ENCODE measurements at regions of chr22 and their contacts with region 1.

Region 1: DNA sequence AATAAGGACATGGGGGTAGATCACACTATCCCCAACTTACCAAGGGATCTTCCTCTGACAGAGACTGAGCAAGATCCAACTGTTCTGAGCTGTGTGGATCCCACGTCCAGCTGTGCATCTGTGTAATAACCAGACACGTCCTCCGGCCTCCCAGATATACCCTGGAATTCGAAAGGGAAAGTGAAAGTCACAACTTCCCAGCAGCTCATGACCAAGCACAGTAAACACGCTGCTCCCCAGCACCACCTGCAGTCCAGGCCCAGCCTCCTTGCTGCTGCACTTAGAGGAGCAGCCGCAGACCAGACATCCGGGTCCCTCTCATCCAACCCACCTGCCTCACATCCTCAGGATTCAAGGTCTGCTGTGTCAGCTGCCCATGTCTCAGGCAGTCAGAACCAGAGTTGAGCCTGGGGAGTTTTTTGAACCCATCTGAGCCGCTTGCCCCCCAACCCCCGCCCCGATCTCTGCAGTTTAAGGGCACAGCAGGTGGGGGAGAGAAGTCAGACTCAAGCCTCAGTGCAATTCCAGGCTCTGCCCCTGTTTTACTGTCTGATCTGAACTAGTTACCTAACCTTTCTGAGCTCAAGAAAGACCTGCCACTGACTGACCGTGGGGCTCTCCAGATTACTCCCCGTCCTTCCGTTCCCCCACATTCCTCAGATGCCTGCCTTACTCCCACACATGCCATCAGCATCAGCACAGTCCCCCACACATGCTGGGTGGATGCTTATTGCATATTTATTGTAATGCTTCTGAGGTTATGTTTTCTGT is at the start of gene APOL2:
- DNase-seq: peak; percentile 75
- ATAC-seq: peak; percentile 98
- H3K4me3 ChIP-seq: peak within 1 kb of the TSS; percentile 96
- H3K27ac ChIP-seq: peak within 1 kb of the TSS; percentile 79
- H3K4me1 ChIP-seq: peaks cover 23% of the 10 kb centered on the region
- H3K27me3 ChIP-seq: no peaks in the 10 kb centered on the region
- CTCF ChIP-seq: peak; percentile 77
- EP300 ChIP-seq: no peak; a peak in 1 of 4 replicates
- POLR2A ChIP-seq: peak; percentile 69
- RAD21 ChIP-seq: peak; percentile 47
- polyA plus RNA-seq, gene APOL2: 4.4 to 14.7 TPM

Region 2: GRCh38 chr22:36156515-36157419 is 82.8 kb before region 1 on chr22:
- CTCF ChIA-PET with region 1: no interaction called
- POLR2A ChIA-PET with region 1: no interaction called
- RAD21 ChIA-PET with region 1: interaction called, 18 read pairs
- SMC1A ChIA-PET with region 1: interaction called, 10 read pairs
- in situ Hi-C with region 1: no loop called
- intact Hi-C with region 1: no loop called
- DNase-seq: no peak
- ATAC-seq: peak; percentile 43
- H3K4me3 ChIP-seq: peak overlapping the region; percentile 64
- H3K27ac ChIP-seq: peak overlapping the region; percentile 86
- H3K4me1 ChIP-seq: peaks cover 36% of the 10 kb centered on the region
- H3K27me3 ChIP-seq: no peaks in the 10 kb centered on the region
- CTCF ChIP-seq: no peak
- EP300 ChIP-seq: no peak
- POLR2A ChIP-seq: no peak
- RAD21 ChIP-seq: no peak

Region 3: DNA sequence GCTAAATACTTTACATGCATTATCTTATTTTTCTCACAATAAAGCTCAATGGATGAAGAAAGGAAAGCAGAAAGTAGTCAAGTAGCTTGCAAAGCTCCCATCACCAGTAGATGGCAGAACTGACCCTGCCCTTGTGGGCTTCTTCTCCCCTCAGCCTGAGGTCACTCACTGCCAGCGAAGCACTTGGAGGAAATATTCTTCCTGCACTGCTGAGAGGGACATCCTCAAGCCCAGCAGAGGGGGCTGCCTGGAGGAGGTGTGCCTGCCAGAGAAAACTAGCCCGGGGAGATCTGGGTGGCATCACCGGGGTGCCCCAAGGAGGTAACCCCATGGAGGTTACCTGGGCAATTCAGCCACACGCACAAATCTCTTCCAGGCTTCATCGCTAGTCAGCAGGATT is 44.6 kb before region 1 on chr22:
- CTCF ChIA-PET with region 1: interaction called, 26 read pairs
- POLR2A ChIA-PET with region 1: no interaction called
- RAD21 ChIA-PET with region 1: interaction called, 10 read pairs
- SMC1A ChIA-PET with region 1: interaction called, 36 read pairs
- in situ Hi-C with region 1: no loop called
- intact Hi-C with region 1: no loop called
- DNase-seq: no peak
- ATAC-seq: peak; percentile 91
- H3K4me3 ChIP-seq: no peak overlapping the region
- H3K27ac ChIP-seq: no peak overlapping the region
- H3K4me1 ChIP-seq: peaks cover 12% of the 10 kb centered on the region
- H3K27me3 ChIP-seq: no peaks in the 10 kb centered on the region
- CTCF ChIP-seq: peak; percentile 68 to 79 (median 78)
- EP300 ChIP-seq: no peak
- POLR2A ChIP-seq: no peak
- RAD21 ChIP-seq: peak; percentile 72

Region 4: DNA sequence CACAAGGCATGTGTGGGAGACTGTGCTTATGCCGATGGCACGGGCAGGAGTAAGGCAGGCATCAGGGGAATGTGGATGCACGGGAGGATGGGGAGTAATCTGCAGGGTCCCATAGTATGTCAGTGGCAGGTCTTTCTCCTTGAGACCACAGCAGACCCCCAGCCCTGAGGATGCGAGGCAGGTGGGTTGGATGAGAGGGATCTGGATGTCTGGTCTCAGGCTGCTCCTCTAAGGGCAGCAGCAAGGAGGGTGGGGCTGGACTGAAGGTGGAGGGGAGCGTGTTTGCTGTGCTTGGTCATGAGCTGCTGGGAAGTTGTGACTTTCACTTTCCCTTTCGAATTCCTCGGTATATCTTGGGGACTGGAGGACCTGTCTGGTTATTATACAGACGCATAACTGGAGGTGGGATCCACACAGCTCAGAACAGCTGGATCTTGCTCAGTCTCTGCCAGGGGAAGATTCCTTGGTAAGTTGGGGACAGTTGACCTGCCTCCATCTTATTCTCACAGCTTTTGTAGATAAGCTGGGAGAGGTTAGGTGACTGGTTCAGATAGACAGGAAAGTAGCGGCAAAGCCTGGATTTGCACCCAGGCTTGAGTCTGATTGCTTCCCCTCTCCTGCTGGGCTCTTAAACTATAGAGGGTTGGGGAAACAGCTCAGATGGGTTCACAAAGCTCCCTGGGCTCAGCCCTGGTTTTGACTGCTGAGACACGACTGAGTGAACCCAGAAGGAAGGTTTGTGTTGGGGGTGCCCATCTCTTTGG is 13.3 kb after region 1 on chr22 and contains the start of gene APOL1:
- CTCF ChIA-PET with region 1: interaction called, 153 read pairs
- POLR2A ChIA-PET with region 1: interaction called, 99 read pairs
- RAD21 ChIA-PET with region 1: interaction called, 100 read pairs
- SMC1A ChIA-PET with region 1: interaction called, 165 read pairs
- in situ Hi-C with region 1: no loop called
- intact Hi-C with region 1: no loop called
- DNase-seq: peak; percentile 62
- ATAC-seq: peak; percentile 83
- H3K4me3 ChIP-seq: peak within 1 kb of the TSS; percentile 91
- H3K27ac ChIP-seq: peak within 1 kb of the TSS; percentile 80
- H3K4me1 ChIP-seq: peaks cover 38% of the 10 kb centered on the region
- H3K27me3 ChIP-seq: no peaks in the 10 kb centered on the region
- CTCF ChIP-seq: no peak
- EP300 ChIP-seq: no peak
- POLR2A ChIP-seq: 0 out of 2 replicates have a peak, but pooled peaks have one; percentile 49
- RAD21 ChIP-seq: no peak
- polyA plus RNA-seq, gene APOL1: 9.0 to 10.7 TPM

Region 5: GRCh38 chr22:36277482-36278291 is 38.1 kb after region 1 on chr22:
- CTCF ChIA-PET with region 1: interaction called, 55 read pairs
- POLR2A ChIA-PET with region 1: no interaction called
- RAD21 ChIA-PET with region 1: interaction called, 11 read pairs
- SMC1A ChIA-PET with region 1: interaction called, 10 read pairs
- in situ Hi-C with region 1: no loop called
- intact Hi-C with region 1: loop called (anchors 5 kb)
- DNase-seq: no peak
- ATAC-seq: peak; percentile 93
- H3K4me3 ChIP-seq: no peak overlapping the region
- H3K27ac ChIP-seq: no peak overlapping the region
- H3K4me1 ChIP-seq: peaks cover 6% of the 10 kb centered on the region
- H3K27me3 ChIP-seq: no peaks in the 10 kb centered on the region
- CTCF ChIP-seq: peak; percentile 79 to 85 (median 83)
- EP300 ChIP-seq: no peak
- POLR2A ChIP-seq: no peak
- RAD21 ChIP-seq: peak; percentile 64

Region 6: GRCh38 chr22:36325154-36326031 is 85.8 kb after region 1 on chr22:
- CTCF ChIA-PET with region 1: no interaction called
- POLR2A ChIA-PET with region 1: no interaction called
- RAD21 ChIA-PET with region 1: no interaction called
- SMC1A ChIA-PET with region 1: no interaction called
- in situ Hi-C with region 1: no loop called
- intact Hi-C with region 1: no loop called
- DNase-seq: no peak
- ATAC-seq: no peak
- H3K4me3 ChIP-seq: no peak overlapping the region
- H3K27ac ChIP-seq: no peak overlapping the region
- H3K4me1 ChIP-seq: peaks cover 19% of the 10 kb centered on the region
- H3K27me3 ChIP-seq: no peaks in the 10 kb centered on the region
- CTCF ChIP-seq: no peak
- EP300 ChIP-seq: no peak
- POLR2A ChIP-seq: no peak; the same call in 1 of the 2 replicates
- RAD21 ChIP-seq: no peak

Measured in GM12878 (cell line).